Psoas muscle (tissue), 8 donors: ENCODE measurements at regions of chr20 and their contacts with region 1.

Region 1: GRCh38 chr20:23147964-23148730 is 62.0 kb upstream of the CD93 start:
- DNase-seq: peak; percentile 87 to 93
- ATAC-seq: peak; percentile 70 to 78 (median 74)
- H3K4me3 ChIP-seq: peak overlapping the region; percentile 53
- H3K27ac ChIP-seq: peak overlapping the region; percentile 96
- H3K4me1 ChIP-seq: peaks cover 86% of the 10 kb centered on the region
- H3K27me3 ChIP-seq: no peaks in the 10 kb centered on the region
- CTCF ChIP-seq: no peak

Region 2: DNA sequence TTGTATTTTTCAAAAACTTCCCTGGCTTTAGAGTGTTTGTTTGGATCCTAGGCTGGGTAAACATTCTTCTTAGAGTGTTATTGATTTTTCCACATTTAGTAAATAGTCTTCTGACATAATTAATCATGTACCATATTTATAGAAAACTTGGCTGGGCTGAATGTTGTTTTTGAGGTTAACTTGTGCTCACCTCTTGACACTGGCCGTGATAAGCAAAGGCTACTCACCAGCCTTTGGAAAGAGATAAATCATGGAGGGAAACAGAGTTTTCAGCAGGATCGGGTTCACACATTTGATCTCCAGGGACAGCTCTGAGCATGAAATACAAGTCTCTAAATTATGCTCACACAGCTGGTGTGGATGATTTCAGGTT is 55.8 kb before region 1 on chr20:
- intact Hi-C with region 1: loop called in 1 of 2 experiments (anchors 1 kb)
- DNase-seq: no peak
- ATAC-seq: peak in 3 of 4 donors; percentile 53 to 76 (median 75)
- H3K4me3 ChIP-seq: no peak overlapping the region
- H3K27ac ChIP-seq: peak overlapping the region; percentile 87
- H3K4me1 ChIP-seq: peaks cover 20% of the 10 kb centered on the region
- H3K27me3 ChIP-seq: no peaks in the 10 kb centered on the region
- CTCF ChIP-seq: no peak

Region 3: DNA sequence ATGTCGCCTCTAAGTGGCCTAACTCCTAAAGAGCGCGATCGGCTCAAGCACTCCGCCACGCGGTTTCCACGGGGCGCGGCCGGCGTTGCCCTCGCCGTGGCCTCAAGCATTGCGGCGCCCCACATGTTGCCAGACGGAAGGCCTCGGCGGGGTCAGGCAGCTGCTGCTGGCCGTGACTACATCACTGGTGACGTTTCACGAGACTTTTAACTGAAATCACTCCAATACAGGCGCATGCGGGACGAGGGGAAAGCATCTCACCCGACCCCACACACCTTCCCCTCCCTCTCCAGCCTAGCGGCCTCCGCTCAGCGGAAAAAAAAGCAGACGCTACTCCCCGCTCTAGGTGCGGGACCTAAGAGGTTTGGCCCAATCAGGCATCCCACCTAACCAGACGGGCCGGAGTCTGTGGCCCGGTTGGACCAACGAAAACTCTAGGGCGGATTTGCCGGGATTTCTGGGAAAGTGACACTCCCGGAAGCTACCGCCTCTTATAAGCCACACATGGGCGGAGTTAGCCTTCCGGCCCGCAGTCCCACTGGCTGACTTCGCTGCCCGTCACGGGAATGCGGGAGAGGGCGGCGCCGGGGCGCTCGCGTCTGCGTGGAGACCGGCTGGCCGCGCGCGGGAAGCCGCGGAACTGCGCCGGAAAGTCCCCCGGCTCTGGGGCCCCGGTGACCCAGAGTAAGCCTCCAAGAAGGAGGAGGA is 202.2 kb after region 1 on chr20 and contains the start of gene NXT1:
- intact Hi-C with region 1: loop called (anchors 5 to 10 kb)
- DNase-seq: peak; percentile 97
- ATAC-seq: peak; percentile 93 to 94 (median 93)
- H3K4me3 ChIP-seq: peak within 1 kb of the TSS; percentile 91
- H3K27ac ChIP-seq: peak within 1 kb of the TSS; percentile 99
- H3K4me1 ChIP-seq: peaks cover 13% of the 10 kb centered on the region
- H3K27me3 ChIP-seq: no peaks in the 10 kb centered on the region
- CTCF ChIP-seq: no peak
- total RNA-seq, gene NXT1: 6.7 to 18.9 (median 11.1) TPM

Region 4: DNA sequence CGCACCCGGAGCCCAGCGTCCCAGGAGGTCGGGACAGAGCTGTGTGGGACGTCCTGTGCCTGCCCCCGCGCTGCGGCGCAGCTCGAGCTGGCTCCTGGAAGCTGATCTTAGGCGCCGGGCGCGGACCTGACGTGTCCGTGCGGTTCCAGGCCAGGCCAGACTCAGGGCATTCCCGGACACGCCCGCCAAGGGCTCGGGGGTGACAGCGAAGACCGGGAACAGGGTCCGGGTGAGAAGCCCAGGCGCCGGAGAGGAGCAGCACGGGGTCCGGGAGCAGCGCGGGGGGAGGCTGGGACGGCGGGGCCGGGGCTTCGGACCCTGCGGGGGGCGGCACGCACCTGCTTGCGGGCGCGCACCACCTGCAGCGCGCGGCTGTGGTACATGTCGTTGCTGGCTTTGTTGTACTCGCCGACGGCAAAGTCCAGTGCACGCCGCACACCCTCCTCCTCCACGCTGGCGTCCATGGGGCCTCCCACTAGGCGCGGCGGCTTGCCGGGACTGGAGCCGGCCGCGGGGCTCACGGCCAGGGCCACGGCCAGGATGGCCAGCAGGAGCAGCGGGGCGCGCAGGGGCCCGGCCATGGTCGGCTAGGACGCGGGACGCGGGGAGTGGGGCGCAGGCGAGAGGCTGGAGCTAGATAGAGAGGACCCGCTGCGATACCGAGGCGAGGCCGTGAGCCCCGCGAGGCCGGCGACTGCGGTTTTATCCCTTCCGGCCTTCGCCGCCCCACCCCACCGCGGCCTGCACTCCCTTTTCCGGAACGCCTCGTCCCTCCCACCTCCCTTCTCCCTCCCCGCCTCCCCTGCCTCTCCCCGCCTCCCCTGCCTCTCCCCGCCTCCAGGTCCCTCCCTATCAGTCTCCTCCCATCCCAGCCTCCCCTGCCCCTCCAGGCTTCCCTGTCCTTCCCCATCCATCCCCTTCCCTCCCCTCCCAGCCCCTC is 489.4 kb after region 1 on chr20 and contains the start of gene CST3:
- intact Hi-C with region 1: loop called in 1 of 2 experiments (anchors 10 kb)
- DNase-seq: peak; percentile 93 to 96
- ATAC-seq: peak; percentile 61 to 76 (median 70)
- H3K4me3 ChIP-seq: peak within 1 kb of the TSS; percentile 99
- H3K27ac ChIP-seq: peak within 1 kb of the TSS; percentile 100
- H3K4me1 ChIP-seq: peaks cover 61% of the 10 kb centered on the region
- H3K27me3 ChIP-seq: no peaks in the 10 kb centered on the region
- CTCF ChIP-seq: no peak
- total RNA-seq, gene CST3: 422 to 713 (median 508) TPM